ENCODE measurements at regions of chr18 and their contacts with region 1.

Region 1: GRCh38 chr18:43620936-43621335 is 343.6 kb upstream of the SYT4 start:
- DNase-seq: no peak

Region 2: DNA sequence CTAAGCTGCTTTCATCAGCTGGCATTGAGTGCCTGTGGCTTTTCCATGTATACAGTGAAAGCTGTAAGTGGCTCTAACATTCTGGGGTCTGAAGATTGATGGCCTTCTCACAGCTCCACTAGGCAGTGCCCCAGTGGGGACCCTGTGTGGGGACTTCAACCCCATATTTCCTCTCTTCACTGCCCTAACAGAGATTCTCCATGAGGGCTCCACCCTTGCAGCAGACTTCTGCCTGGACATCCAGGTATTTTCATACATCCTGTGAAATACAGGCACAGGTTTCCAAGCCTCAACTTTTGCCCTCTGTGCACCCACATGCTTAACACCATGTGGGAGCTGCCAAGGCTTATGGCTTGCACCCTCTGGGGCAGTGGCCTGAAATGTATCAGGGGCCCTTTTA is 155.5 kb before region 1 on chr18:
- intact Hi-C with region 1: no loop called
- DNase-seq: no peak

Region 3: GRCh38 chr18:43559507-43559906 is 61.4 kb before region 1 on chr18:
- intact Hi-C with region 1: no loop called
- DNase-seq: peak in 1 of 10 donors; percentile 80

Region 4: GRCh38 chr18:45212181-45213039 is 1591.5 kb after region 1 on chr18:
- intact Hi-C with region 1: loop called (anchors 10 kb)
- DNase-seq: peak in 9 of 10 donors; percentile 30 to 93 (median 73)

Region 5: DNA sequence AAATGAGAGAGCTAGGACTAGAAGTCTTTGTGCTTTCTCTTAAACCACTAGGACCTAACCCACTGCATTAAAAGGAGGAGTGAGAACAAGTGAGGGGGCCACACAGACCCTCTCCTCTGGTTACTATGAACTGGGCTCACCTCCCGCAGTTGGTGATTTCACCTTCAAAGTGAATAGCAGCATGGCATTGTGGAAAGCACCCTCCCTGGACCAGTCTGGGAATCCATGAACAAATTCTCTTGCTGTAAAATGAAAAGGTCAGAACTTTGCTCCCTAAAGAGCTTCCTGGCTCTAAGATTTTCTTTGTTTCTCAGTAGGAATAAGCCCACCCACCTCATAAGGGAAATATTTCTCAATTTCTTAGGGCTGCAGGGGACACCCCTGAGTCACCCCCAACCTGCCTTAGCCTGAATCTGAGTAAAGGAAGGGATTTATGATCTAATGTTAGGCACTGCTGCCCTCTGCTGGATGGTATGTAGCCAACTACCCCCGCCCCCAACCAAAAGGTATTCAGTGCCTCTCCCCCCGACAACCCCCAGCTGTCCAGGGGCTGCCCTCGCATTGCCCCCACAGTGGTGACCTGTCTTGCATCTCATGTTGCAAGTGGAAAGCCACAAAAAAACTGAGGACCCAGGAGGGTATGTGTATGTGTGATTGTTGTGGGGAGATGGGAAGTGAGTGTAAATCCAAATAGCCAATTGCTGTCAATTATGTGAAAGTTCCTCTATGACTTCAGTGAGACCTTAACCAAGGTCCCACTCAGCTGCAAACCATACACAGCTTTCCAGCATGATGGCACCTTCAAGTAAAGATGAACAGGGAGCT is 1763.4 kb after region 1 on chr18:
- intact Hi-C with region 1: loop called (anchors 5 kb)
- DNase-seq: peak in 7 of 10 donors; percentile 20 to 88 (median 51)

Region 6: DNA sequence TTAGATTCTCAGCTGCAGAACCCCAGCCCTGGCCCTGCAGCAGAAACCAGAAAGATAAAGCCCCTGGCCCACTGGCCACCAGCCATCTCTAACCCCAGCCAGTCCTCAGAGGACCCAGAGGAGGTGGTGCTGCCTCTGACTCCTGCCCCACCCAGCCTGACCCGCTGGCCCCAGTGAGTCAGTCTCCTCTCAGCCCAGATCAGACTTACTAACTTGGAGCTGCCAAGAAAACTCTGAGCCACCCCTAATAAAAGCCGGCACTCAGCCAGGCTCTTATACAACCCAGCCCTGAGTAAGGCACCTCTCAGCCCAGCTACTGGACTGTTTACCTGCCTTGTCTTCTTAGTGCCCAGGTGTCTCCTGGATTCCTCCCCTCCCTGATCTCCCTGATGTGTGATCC is 1996.3 kb after region 1 on chr18:
- intact Hi-C with region 1: loop called (anchors 10 kb)
- DNase-seq: peak in 1 of 10 donors; percentile 30